ENCODE measurements at regions of chr14 and their contacts with region 1.

Region 1: GRCh38 chr14:102096214-102097114 is 9.6 kb upstream of the HSP90AA1 start:
- DNase-seq: peak in 1 of 2 experiments; percentile 88
- H3K4me3 ChIP-seq: no peak overlapping the region
- H3K27ac ChIP-seq: no peak overlapping the region
- H3K4me1 ChIP-seq: peaks cover 0 to 14% (median 9%) of the 10 kb centered on the region in 4 experiments; a peak in 6 of 7 replicates
- H3K27me3 ChIP-seq: no peaks in the 10 kb centered on the region
- CTCF ChIP-seq: peak; percentile 60 to 80 (median 78)
- EP300 ChIP-seq: no peak
- POLR2A ChIP-seq: no peak
- RAD21 ChIP-seq: peak; percentile 85 to 91

Region 2: DNA sequence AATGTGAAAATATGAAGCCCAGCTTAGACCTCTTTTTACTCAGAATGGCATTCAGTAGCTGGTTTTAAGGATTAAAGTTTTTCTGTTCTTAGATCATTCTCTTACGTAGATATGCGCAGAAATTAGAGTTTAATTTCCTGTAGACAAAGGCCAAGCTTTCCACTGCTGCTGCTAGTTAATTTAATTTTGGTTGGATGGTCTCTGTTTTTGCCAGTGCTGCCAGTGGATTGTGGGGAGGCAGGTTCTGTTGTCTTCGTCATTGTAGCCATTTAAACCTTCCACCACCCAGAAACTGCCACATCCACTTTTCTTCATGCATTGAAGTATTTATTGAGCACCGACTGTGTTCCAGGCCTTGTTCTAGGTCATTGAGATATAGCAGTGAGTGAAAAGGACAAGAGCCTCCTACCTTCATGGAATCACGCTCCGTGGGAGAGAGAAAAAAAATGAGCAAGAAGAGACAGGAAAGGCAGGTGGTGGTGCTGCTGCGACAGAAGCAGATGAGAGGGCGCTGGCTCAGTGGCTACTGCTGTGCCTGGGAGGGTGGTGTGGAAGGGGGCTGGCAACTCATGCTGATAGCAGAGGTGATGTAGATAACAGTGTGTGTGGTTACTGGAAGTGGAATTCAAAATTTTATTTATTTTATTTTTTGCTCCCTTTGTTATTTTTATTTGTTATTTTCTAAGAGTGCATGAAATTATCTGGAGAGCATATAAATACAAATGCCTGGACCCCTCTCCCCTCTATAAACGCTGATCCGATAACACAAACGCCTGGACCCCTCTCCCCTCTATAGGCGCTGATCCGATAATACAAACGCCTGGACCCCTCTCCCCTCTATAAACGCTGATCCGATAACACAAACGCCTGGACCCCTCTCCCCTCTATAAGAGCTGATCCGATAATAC is 98.8 kb before region 1 on chr14:
- CTCF ChIA-PET with region 1: no interaction called
- POLR2A ChIA-PET with region 1: no interaction called
- DNase-seq: no peak
- H3K4me3 ChIP-seq: no peak overlapping the region
- H3K27ac ChIP-seq: no peak overlapping the region
- H3K4me1 ChIP-seq: no peaks in the 10 kb centered on the region
- H3K27me3 ChIP-seq: no peaks in the 10 kb centered on the region
- CTCF ChIP-seq: no peak
- EP300 ChIP-seq: no peak
- POLR2A ChIP-seq: no peak
- RAD21 ChIP-seq: no peak

Region 3: DNA sequence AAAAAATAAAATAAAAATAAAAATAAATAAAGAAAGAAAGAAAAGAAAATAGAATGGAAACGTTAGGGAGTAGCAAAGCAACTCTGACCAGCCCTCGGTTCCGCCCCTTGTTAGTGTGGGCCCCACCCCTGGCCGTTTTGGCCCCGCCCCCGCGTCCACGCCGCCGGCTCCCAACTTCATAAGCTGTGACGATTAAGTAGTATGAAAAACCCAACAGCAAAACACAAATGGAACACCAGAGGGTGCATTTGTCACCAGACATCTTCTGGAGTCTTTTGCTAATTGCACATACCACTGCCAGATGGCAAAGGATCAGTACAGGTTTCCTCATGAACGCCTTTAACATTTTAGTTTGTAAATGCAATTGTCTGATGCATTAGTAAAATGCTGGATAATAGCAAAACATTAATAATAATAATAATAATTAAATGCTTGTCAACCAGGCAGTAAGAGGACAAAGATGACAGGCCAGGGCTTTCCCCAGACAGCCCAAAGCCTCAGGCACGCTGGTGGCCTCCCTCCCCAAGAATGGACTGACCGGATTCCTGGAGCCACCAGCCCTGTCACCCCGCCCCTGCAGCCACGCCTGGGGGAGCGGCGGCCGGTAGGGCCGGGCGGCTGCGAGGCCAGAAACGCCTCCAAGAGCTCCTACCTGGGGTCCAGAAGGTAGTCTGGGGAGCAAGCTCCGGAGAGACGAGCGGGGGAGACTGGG is 33.2 kb before region 1 on chr14:
- CTCF ChIA-PET with region 1: interaction called, 37 read pairs
- POLR2A ChIA-PET with region 1: interaction called, 3 read pairs
- DNase-seq: peak in 1 of 2 experiments; percentile 85
- H3K4me3 ChIP-seq: peak overlapping the region in 1 of 4 experiments; percentile 17; a peak in 1 of 8 replicates
- H3K27ac ChIP-seq: no peak overlapping the region
- H3K4me1 ChIP-seq: peaks cover 0 to 3% (median 0%) of the 10 kb centered on the region in 4 experiments; a peak in 1 of 7 replicates
- H3K27me3 ChIP-seq: no peaks in the 10 kb centered on the region
- CTCF ChIP-seq: no peak; a peak in 1 of 4 replicates
- EP300 ChIP-seq: no peak
- POLR2A ChIP-seq: no peak
- RAD21 ChIP-seq: peak in 1 of 2 experiments; percentile 18; a peak in 1 of 4 replicates

Region 4: DNA sequence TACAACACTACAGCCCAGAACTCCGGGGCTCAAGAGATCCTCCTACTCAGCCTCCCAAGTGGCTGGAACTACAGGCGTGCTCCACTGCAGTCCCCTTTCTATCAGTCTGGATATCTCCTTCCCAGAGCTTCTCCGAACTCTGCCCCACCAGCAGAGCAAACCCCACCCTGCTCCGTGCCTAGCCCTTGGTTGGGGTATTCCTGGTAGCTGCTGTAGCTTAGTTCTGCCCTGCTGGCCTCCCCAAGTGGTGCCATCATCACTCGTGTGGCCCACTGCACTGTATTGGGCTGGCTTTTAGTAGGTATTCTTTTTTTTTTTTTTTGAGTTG is 19.1 kb before region 1 on chr14:
- CTCF ChIA-PET with region 1: interaction called, 13 read pairs
- POLR2A ChIA-PET with region 1: interaction called, 6 read pairs
- DNase-seq: no peak
- H3K4me3 ChIP-seq: no peak overlapping the region
- H3K27ac ChIP-seq: no peak overlapping the region
- H3K4me1 ChIP-seq: no peaks in the 10 kb centered on the region
- H3K27me3 ChIP-seq: no peaks in the 10 kb centered on the region
- CTCF ChIP-seq: no peak
- EP300 ChIP-seq: no peak
- POLR2A ChIP-seq: no peak
- RAD21 ChIP-seq: no peak